ENCODE measurements at regions of chrX and their contacts with region 1.

Region 1: DNA sequence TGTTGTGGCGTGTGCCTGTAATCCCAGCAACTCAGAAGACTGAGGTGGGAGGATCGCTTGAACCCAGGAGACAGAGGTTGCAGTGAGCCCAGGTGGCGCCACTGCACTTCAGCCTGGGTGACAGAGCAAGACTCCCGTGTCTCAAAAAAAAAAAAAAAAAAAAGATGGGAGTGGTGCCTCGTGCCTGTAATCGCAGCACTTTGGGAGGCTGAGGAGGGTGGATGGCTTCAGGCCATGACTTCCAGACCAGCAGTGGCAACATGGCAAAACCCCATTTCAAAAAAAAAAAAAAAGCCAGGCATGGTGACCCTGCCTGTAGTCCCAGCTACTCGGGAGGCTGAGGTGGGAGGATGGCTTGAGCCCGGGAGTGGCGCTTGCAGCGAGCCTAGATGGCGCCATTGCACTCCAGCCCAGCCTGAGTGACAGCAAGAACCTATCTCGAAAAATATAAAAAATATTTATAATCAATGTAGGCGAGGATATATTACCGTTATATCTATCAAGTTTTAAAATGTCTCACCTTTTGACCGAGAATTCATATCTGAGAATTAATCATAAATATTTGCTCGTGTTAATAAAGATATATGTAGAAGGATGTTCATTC is 27.0 kb downstream of the EIF2S3 start:
- DNase-seq: peak; percentile 63 to 84
- ATAC-seq: peak; percentile 72
- H3K4me3 ChIP-seq: no peak overlapping the region
- H3K27ac ChIP-seq: no peak overlapping the region
- H3K4me1 ChIP-seq: no peaks in the 10 kb centered on the region
- H3K27me3 ChIP-seq: no peaks in the 10 kb centered on the region

Region 2: DNA sequence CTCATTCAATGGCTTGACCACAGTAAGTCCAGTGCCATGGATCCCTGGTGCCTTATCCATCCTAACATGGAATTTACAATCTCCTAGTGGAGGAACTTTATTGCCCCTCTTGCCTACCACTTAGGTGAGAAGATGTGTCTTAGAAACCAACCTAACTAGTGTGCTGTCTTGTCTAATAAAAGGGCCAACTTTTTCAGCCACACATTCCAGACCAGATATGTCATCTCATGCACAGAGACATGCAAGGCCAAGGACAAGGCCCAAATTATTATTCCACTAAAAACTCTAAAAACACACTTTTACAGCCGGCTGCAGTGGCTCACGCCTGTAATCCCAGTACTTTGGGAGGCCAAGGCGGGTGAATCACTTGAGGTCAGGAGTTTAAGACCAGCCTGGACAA is 425.1 kb before region 1 on chrX:
- intact Hi-C with region 1: no loop called
- DNase-seq: no peak
- ATAC-seq: no peak
- H3K4me3 ChIP-seq: no peak overlapping the region
- H3K27ac ChIP-seq: no peak overlapping the region
- H3K4me1 ChIP-seq: no peaks in the 10 kb centered on the region
- H3K27me3 ChIP-seq: no peaks in the 10 kb centered on the region

Region 3: GRCh38 chrX:24241822-24242648 is 160.3 kb after region 1 on chrX:
- intact Hi-C with region 1: loop called (anchors 10 kb)
- DNase-seq: no peak
- ATAC-seq: peak; percentile 60
- H3K4me3 ChIP-seq: no peak overlapping the region
- H3K27ac ChIP-seq: no peak overlapping the region
- H3K4me1 ChIP-seq: no peaks in the 10 kb centered on the region
- H3K27me3 ChIP-seq: no peaks in the 10 kb centered on the region

Measured in aorta (tissue), 5 donors.